Cardiac septum (tissue), 1 donor: ENCODE measurements at regions of chr10 and their contacts with region 1.

Region 1: GRCh38 chr10:63157845-63158624 is 24.9 kb downstream of the NRBF2 start:
- DNase-seq: no peak

Region 2: DNA sequence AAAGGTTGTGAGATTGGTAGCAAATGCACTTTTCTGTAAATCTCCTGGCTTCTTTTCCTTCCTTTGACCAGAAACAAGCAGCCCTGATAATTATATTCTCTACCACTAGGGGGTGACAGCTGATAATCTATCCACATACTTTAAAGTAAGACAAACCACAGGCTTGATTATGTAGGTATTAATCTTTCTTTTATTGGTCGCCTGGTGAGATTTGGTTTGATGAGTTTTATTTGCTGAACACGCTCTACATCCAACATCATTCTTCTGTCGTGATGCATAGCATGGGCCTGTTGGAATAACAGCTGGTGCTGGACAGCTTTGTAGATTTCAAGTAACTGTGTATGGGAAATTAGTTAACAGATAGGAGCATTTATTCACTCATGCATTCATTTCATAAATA is 720.3 kb before region 1 on chr10:
- intact Hi-C with region 1: loop called (anchors 10 kb)
- DNase-seq: no peak

Region 3: DNA sequence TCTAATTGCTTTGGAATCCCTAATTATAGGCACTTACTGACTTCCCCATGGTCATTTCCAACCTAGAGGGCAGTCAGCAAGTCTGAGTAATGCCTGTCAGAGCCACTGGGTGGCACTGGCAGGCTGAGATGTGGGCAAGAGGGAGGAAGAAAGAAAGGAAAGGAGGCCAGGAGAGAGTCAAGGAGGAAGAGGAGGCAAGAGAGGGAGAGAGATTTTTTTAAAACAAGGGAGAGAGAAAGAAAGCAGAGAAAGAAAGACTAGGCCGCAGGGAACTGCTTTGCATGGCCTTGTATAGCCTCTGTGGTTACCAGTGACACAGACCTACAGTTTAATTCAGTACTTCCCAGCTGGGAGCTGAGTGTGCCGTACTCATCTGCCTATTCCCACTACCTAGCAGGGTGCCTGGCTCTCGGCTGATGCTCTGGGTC is 563.9 kb before region 1 on chr10:
- intact Hi-C with region 1: loop called (anchors 5 kb)
- DNase-seq: peak; percentile 84

Region 4: DNA sequence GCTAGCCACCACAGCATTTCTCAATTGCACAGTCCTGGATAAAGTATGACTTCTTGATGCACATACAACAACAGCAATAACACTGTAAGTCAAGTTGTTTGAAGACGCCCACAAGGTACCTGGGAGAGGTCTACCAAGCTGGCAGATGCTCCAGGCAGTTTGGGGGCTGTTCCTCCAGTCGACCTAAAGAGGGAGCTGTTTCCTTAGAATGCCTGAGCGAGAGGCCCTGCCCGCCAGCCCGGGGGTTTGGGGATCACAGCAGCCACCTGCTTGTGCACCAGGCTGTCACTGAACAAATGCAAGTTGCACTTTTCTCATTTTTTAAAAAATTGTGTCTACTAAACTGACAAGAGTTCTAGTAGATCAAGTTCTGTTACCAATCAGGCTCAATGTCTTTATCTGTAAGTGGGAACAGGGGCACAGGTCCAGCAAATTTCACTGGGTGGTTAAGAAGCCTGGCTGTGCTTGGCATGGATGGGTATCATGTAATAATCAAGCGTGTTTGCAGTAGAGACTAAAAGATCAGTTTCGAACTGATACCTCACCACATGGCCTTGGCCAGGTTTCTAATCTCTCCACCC is 547.3 kb before region 1 on chr10:
- intact Hi-C with region 1: loop called (anchors 5 kb)
- DNase-seq: peak; percentile 81